ENCODE measurements at regions of chr6 and their contacts with region 1.

Region 1: DNA sequence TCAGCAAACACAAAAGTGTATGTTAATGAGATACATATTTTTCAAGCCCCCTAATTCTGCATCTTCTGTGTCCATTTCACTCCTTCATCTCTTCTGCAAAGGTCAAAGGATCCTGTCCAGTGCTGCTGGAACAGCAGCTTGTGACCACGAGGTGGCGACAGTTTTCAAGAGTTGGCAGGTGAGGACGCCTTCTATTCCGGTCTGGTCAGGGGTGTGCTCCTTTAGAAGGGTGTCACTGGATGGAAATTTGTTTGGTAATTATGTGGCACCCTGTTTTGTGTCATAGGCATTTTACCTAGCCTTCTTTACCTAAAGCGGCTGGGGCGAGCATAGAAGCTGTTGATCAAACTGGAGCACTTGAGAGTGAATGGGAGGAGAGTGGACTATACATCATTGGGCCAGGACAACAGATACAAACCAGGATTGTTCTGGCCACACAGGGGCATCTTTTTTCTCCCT is 32.9 kb upstream of the ERVFRD-1 start:
- DNase-seq: peak; percentile 83
- H3K4me3 Mint-ChIP-seq: no peak overlapping the region
- H3K27ac Mint-ChIP-seq: no peak overlapping the region
- H3K4me1 Mint-ChIP-seq: no peaks in the 10 kb centered on the region
- H3K27me3 Mint-ChIP-seq: peaks cover 15% of the 10 kb centered on the region

Region 2: GRCh38 chr6:11025921-11026635 is 118.3 kb before region 1 on chr6:
- CTCF ChIA-PET with region 1: no interaction called
- DNase-seq: no peak
- H3K4me3 Mint-ChIP-seq: no peak overlapping the region
- H3K27ac Mint-ChIP-seq: no peak overlapping the region
- H3K4me1 Mint-ChIP-seq: no peaks in the 10 kb centered on the region
- H3K27me3 Mint-ChIP-seq: peaks cover 34% of the 10 kb centered on the region

Region 3: GRCh38 chr6:11575408-11576033 is 431.1 kb after region 1 on chr6:
- CTCF ChIA-PET with region 1: interaction called, 11 read pairs
- DNase-seq: peak; percentile 68
- H3K4me3 Mint-ChIP-seq: no peak overlapping the region
- H3K27ac Mint-ChIP-seq: no peak overlapping the region
- H3K4me1 Mint-ChIP-seq: no peaks in the 10 kb centered on the region
- H3K27me3 Mint-ChIP-seq: no peaks in the 10 kb centered on the region

Measured in activated naive CD4-positive, alpha-beta T cell treated with anti-CD3 and anti-CD28 coated beads, Interleukin-2, amount 10 ng/mL, durations not matched to agents 7 days and 5 days (primary cell).